ENCODE measurements at regions of chr2 and their contacts with region 1.

Region 1: DNA sequence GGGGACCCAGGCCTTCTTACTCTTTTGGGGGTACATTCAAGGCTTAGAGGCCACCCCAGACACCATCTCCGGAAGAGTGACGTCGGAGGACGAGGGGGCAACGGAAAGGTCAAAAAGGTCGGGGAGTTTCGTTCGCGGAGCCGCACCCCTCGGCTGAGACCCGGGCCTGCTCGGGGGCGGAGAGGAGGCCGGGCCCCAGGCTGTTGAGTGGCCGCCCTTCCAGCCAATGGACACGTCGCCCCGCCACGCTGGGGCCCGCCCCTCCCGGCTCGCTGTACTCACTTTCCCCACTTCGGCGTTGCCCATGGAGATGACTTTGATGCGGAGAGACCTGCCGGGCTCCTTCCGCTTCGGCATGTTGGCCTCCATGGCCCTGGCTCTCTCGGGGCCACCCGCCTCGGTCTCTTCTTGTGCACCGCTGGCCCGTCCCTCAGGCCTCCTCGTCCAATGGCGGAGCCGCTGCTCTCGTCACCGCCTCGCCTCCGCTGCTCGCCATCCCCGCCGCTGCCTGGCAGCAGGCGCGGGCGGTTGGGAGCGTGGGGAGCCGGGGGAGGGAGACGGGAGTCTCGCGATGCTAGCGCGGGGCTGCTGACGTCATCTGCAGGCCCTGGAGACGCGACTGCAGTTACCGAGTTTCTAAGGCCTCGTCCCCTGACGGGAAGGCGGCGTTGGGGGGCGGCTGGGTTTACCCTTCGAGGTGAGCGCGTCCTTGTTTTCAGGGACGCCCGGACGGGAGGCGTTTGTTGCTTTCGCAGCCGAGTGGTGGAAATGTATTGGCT is at the start of gene DNAJC27:
- DNase-seq: peak; percentile 96
- H3K4me3 Mint-ChIP-seq: peak within 1 kb of the TSS; percentile 96
- H3K27ac Mint-ChIP-seq: peak within 1 kb of the TSS; percentile 100
- H3K4me1 Mint-ChIP-seq: peaks cover 19% of the 10 kb centered on the region
- H3K27me3 Mint-ChIP-seq: no peaks in the 10 kb centered on the region
- total RNA-seq, gene DNAJC27: 6.3 and 7.0 TPM in 2 replicates

Region 2: GRCh38 chr2:23926750-23927571 is 1044.8 kb before region 1 on chr2 and contains the start of gene ATAD2B:
- intact Hi-C with region 1: loop called (anchors 2 kb)
- DNase-seq: peak; percentile 93
- H3K4me3 Mint-ChIP-seq: peak within 1 kb of the TSS; percentile 95
- H3K27ac Mint-ChIP-seq: peak within 1 kb of the TSS; percentile 99
- H3K4me1 Mint-ChIP-seq: peaks cover 40% of the 10 kb centered on the region
- H3K27me3 Mint-ChIP-seq: peaks cover 2% of the 10 kb centered on the region
- total RNA-seq, gene ATAD2B: 25.9 and 27.8 TPM in 2 replicates

Region 3: DNA sequence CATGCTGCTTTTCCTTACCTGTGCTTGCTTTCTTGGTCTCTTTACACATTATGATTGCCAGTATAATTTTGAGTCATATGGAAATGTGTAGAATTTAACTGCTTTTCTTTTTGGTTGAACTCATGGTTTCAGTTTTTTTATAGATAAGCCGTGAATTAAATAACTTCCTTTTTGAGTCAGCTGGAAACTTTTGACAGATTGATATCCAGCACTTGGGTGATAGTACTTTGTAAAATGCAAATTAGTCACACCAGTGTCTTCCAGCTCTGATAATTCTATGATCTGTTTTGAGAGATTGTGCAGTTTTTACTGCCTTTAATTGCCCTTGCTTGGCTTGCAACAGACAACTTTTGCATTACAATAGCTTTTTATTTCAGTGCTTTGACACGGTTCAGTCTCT is 394.2 kb before region 1 on chr2:
- intact Hi-C with region 1: loop called (anchors 5 kb)
- DNase-seq: no peak
- H3K4me3 Mint-ChIP-seq: peak overlapping the region; percentile 69
- H3K27ac Mint-ChIP-seq: peak overlapping the region; percentile 82
- H3K4me1 Mint-ChIP-seq: peaks cover 73% of the 10 kb centered on the region
- H3K27me3 Mint-ChIP-seq: no peaks in the 10 kb centered on the region

Region 4: DNA sequence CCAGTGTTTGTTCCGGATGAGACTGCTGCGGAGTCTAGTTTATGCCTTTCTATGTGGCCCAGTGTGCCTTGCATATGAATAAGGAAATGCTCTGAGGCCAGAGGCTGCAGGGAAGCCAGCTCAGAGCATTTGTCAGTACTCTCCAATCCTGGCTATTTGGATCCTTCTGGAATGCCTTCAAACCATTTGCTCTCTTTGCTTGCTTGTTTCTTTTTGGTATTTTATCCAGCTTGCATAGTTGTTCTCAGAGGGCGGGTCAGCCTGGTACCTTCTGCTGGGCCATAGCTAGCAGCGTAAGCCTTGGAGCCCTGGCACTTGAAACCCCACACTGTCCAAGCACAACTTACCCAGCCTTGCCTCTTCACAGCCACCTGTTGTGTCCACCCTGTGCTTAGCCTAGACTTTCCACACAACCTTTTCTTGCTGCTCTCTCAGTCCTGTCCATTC is 158.0 kb before region 1 on chr2:
- intact Hi-C with region 1: no loop called
- DNase-seq: no peak
- H3K4me3 Mint-ChIP-seq: no peak overlapping the region
- H3K27ac Mint-ChIP-seq: no peak overlapping the region
- H3K4me1 Mint-ChIP-seq: peaks cover 19% of the 10 kb centered on the region
- H3K27me3 Mint-ChIP-seq: no peaks in the 10 kb centered on the region

Region 5: DNA sequence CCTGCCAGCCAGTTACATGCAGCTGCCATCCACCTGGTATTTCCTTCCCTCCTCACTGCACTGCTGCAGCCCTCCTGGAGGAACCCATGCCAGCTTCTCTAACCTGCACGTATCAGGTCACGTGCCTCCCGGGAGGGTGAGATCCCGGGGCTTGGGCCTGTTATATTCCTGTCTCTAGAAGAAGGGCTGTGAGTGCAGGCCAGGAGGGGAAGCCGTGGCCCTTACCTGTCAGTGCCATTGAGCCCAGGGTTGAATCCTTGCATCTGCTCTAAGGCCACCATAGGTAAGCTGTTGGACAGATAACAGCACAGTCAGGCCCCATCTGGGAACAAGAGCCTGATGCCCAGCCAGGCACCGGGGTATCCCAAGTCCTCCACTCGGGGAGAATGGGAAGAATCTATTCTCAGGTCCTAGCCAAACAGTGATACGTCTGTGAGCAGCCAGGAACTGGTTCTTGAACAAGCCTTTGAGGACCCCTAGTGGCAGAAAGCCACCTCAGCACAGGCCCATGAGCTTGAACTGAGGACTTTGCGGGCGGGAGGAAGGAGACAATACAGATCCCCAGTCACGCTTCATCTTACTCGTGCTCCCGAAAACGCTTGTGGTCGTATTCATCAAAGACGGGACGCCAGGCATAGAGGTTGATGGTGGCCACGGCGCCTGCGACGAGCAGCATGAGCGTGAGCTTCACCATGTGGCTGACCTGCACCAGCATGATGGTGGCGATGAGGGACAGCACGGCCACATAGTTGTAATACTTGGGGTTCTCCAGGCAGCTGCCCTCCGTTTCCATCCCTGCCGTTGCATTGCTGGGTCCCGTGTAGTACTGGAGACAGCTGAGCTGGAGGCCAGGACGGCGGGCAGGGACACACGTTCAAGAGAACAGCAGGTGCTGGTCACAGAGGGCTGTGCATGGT is 144.1 kb before region 1 on chr2:
- intact Hi-C with region 1: loop called (anchors 2 kb)
- DNase-seq: peak; percentile 65
- H3K4me3 Mint-ChIP-seq: no peak overlapping the region
- H3K27ac Mint-ChIP-seq: peak overlapping the region; percentile 86
- H3K4me1 Mint-ChIP-seq: peaks cover 25% of the 10 kb centered on the region
- H3K27me3 Mint-ChIP-seq: no peaks in the 10 kb centered on the region

Region 6: DNA sequence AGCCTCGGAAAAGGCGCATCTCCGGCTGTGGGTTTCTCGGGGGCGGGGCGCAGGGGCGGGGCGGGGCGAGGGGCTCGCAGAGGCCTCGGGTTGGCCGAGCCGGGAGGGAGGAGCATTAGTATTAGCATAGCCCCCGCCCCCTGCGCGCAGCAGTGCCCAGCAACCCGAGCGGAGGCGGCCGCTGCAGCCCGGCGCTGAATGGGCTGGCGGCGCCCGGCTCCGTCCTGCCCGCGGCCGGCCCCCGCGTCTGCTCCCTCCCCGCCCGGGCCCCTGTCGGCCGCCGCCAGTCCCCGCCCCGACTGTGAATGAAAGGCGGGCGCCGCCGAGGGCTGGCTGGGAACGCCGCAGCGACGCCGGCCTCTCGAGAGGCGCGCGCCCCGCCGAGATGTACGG is 70.2 kb after region 1 on chr2 and contains the start of gene EFR3B:
- intact Hi-C with region 1: loop called (anchors 1 kb)
- DNase-seq: peak; percentile 83
- H3K4me3 Mint-ChIP-seq: peak within 1 kb of the TSS; percentile 81
- H3K27ac Mint-ChIP-seq: no peak within 1 kb of the TSS
- H3K4me1 Mint-ChIP-seq: peaks cover 26% of the 10 kb centered on the region
- H3K27me3 Mint-ChIP-seq: peaks cover 49% of the 10 kb centered on the region
- total RNA-seq, gene EFR3B: 0.21 and 0.22 TPM in 2 replicates

Region 7: DNA sequence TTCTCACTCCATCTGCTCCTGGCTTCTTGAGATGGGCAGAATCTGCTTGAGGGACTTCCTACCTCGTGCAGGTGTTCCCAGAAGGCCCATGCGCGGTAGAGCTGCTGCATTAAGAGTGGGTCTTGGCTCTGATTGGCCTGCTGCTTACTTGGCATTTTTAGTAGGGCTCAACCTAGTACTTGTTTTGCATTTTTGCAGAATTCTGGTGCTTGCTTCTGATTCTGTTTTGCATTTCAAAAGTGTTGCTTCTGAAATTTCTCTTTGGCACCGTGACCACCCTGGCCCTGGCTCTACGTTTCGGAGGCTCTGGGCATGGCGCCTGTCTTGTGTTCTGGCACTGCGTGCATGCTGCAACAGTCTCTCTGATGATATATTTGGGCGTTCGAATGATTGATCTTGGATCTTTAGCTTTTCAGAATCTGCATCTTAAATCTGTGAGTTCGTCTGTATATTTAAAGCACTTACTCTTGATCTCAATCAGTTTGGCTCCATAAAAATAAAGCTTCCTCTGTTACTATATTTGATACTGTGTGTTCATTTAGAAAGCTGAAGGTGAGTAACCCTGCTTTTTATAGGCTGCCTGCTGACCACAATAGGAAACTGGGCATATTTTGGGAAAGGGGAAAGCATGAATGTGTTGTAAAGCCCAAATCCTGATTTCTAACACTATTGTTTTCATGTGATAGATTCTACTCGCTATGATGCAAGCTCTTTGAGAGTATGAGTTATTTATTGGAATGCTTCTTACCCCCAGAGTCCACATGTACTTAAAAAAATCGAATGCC is 92.3 kb after region 1 on chr2:
- intact Hi-C with region 1: no loop called
- DNase-seq: no peak
- H3K4me3 Mint-ChIP-seq: no peak overlapping the region
- H3K27ac Mint-ChIP-seq: no peak overlapping the region
- H3K4me1 Mint-ChIP-seq: peaks cover 6% of the 10 kb centered on the region
- H3K27me3 Mint-ChIP-seq: no peaks in the 10 kb centered on the region

Region 8: DNA sequence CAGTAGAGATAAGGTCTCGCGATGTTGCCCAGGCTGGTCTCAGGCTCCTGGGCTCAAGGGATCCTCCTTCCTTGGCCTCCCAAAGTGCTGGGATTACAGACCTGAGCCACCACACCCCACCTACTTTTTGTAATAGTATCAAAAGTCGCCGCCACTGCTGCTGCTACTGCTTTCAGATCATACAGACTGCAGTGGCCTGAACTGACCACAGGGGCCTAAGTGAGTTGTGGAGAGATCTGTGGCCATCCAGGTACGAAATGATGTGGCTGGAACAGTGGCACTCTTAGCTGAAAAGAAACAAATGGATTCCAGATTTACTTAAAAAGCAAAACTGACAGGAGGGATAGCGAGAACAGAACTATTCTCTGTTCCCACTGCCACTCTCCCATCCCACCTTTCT is 229.5 kb after region 1 on chr2:
- intact Hi-C with region 1: loop called (anchors 1 kb)
- DNase-seq: no peak
- H3K4me3 Mint-ChIP-seq: no peak overlapping the region
- H3K27ac Mint-ChIP-seq: no peak overlapping the region
- H3K4me1 Mint-ChIP-seq: peaks cover 8% of the 10 kb centered on the region
- H3K27me3 Mint-ChIP-seq: peaks cover 12% of the 10 kb centered on the region

Region 9: GRCh38 chr2:25567406-25567805 is 595.7 kb after region 1 on chr2:
- intact Hi-C with region 1: loop called (anchors 10 kb)
- DNase-seq: no peak
- H3K4me3 Mint-ChIP-seq: no peak overlapping the region
- H3K27ac Mint-ChIP-seq: no peak overlapping the region
- H3K4me1 Mint-ChIP-seq: peaks cover 16% of the 10 kb centered on the region
- H3K27me3 Mint-ChIP-seq: no peaks in the 10 kb centered on the region